ENCODE measurements at regions of chr7 and their contacts with region 1.

Region 1: GRCh38 chr7:74582017-74582416 is 75.5 kb upstream of the GTF2I start:
- DNase-seq: peak; percentile 91 to 94
- H3K4me3 ChIP-seq: no peak overlapping the region
- H3K27ac ChIP-seq: peak overlapping the region; percentile 89
- H3K4me1 ChIP-seq: peaks cover 85% of the 10 kb centered on the region
- H3K27me3 ChIP-seq: no peaks in the 10 kb centered on the region
- CTCF ChIP-seq: no peak

Region 2: DNA sequence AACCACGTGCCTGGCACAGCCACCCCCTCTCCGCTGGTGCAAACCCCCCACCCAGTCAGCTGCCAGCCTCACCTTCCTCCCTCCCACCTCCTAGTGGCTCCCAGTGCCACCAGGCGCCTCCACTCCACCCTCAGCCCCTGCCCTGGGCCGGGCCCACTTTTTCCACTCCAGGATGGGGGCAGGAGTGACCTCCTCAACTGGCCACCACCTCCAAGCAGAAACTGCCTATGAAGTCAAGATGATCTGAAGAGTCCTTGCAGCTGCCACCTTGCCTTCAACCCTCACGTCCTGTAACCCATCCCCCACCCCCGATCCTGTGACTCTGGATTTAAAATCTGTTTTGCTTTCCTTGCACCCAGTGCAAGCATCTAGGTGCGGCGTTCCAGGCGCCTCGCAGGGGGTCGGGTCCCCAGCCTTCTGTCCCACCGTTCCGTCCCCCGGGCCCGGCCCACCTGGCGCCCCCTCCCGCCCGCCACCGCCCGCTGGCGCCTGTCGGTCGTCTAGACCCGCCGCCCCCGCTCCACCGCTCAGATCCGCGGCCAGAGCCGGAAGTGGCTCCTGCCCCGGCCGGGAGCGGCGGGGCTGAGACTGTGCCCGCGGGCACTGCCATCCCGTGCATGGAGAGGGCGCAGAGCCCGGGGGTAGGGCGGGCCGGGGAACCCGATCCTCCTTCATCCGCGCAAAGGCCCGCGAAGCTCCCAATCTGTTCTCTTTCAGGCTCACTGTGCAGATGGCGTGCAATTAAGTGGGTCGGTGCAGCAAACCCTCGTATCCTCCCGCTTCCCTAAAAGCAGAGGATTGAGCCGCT is 24.3 kb after region 1 on chr7:
- CTCF ChIA-PET with region 1: interaction called, 8 read pairs
- POLR2A ChIA-PET with region 1: no interaction called
- intact Hi-C with region 1: loop called (anchors 2 kb)
- DNase-seq: peak in 1 of 2 experiments; percentile 79
- H3K4me3 ChIP-seq: no peak overlapping the region
- H3K27ac ChIP-seq: no peak overlapping the region
- H3K4me1 ChIP-seq: peaks cover 35% of the 10 kb centered on the region
- H3K27me3 ChIP-seq: no peaks in the 10 kb centered on the region
- CTCF ChIP-seq: no peak

Region 3: DNA sequence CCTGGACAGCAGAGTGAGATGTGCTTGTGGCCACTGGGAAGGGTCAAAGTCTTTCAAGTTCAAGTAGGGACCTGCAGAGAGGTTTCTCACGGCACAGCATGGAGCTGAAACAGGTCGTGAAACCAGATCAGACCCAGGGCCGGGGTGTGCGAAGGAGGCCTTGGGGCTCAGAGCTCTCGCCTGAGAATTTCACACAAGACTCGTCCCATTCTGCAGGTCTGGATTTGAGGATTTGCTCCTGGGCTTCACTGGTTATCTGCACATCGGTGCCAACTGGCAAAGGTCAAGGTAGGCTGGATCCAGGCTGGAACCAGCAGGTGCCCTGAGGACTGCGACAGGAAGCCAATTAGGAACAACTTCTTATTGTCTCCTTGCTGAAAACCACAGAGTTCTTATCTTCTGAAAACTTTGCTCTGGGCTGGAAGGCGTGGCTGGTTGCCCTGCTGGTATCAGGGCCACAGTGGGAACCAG is 51.5 kb after region 1 on chr7:
- CTCF ChIA-PET with region 1: no interaction called
- POLR2A ChIA-PET with region 1: no interaction called
- intact Hi-C with region 1: loop called (anchors 1 kb)
- DNase-seq: peak; percentile 63
- H3K4me3 ChIP-seq: no peak overlapping the region
- H3K27ac ChIP-seq: peak overlapping the region; percentile 13; the same call in 1 of the 2 replicates
- H3K4me1 ChIP-seq: peaks cover 32% of the 10 kb centered on the region
- H3K27me3 ChIP-seq: no peaks in the 10 kb centered on the region
- CTCF ChIP-seq: no peak

Measured in PC-9 (cell line).